Mammary epithelial cell (primary cell): ENCODE measurements at regions of chr14 and their contacts with region 1.

Region 1: GRCh38 chr14:77616454-77617229 is at the start of gene SPTLC2:
- DNase-seq: peak; percentile 99
- H3K4me3 ChIP-seq: peak within 1 kb of the TSS; percentile 75 to 79 (median 77)
- H3K27ac ChIP-seq: peak within 1 kb of the TSS; percentile 78
- H3K4me1 ChIP-seq: peaks cover 22% of the 10 kb centered on the region
- H3K27me3 ChIP-seq: no peaks in the 10 kb centered on the region
- CTCF ChIP-seq: peak in 1 of 2 donors; percentile 30
- total RNA-seq, gene SPTLC2: 38.7 to 47.2 TPM

Region 2: DNA sequence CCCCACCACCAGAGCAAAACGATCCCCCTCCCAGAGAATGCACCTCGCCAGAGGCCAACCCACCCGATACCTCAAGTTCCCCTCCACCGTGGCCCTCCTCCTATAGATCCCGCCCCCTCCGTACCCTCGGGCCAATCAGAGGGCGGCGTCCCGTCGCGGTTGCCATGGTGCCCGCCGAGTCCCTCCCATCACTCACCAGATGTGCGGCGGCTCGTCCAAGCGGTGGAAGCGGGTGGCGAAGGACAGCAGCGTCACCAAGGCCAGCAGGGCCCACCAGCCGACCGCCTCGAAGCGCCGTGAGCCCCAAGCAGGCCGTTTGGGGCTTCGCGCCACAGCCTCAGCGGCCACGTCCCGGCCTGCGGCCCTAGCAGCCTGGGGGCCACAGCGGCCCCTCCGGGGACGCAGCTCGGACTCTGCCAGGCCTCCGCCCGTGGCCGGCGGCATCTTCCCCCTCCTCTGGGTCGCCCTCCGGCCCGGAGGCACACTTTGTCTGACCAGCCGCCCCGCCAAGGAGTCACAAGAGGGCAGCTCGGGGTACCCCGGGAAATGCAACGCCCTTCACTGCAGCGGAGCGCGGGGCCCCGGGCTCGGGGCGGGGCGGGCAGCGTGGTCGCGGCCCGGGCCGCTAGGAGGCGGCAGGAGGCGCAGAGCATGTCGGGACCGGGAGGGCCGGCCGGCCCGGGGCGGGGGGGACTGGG is 296.3 kb before region 1 on chr14 and contains the start of gene POMT2:
- CTCF ChIA-PET with region 1: no interaction called
- dilution Hi-C with region 1: no loop called
- in situ Hi-C with region 1: no loop called
- intact Hi-C with region 1: loop called (anchors 10 kb)
- DNase-seq: peak; percentile 88
- H3K4me3 ChIP-seq: peak within 1 kb of the TSS; percentile 89 to 92 (median 90)
- H3K27ac ChIP-seq: peak within 1 kb of the TSS; percentile 87
- H3K4me1 ChIP-seq: peaks cover 38% of the 10 kb centered on the region
- H3K27me3 ChIP-seq: no peaks in the 10 kb centered on the region
- CTCF ChIP-seq: peak in 1 of 2 donors; percentile 34
- total RNA-seq, gene POMT2: 17.0 to 38.4 TPM

Region 3: DNA sequence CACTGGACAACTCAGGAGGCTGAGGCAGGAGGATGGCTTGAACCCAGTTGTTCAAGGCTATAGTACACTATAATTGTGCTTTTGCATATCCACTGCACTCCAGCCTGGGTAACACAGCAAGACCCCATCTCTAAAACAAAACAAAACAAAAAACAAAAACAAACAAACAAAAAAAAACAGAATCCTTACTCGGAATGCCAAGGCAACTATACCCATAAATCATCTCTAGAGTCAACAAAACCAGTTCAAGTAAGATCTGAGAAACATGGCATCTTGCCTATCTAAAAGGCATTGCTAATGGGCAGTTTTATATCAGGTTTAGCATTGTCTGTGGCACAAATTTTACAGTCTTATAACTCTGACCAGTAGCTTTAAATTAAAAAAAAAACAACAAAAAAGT is 227.7 kb before region 1 on chr14:
- CTCF ChIA-PET with region 1: no interaction called
- dilution Hi-C with region 1: no loop called
- in situ Hi-C with region 1: no loop called
- intact Hi-C with region 1: no loop called
- DNase-seq: no peak
- H3K4me3 ChIP-seq: no peak overlapping the region
- H3K27ac ChIP-seq: no peak overlapping the region
- H3K4me1 ChIP-seq: no peaks in the 10 kb centered on the region
- H3K27me3 ChIP-seq: no peaks in the 10 kb centered on the region
- CTCF ChIP-seq: no peak

Region 4: GRCh38 chr14:77542421-77543239 is 74.0 kb before region 1 on chr14:
- CTCF ChIA-PET with region 1: no interaction called
- dilution Hi-C with region 1: loop called (anchors 5 kb)
- in situ Hi-C with region 1: no loop called
- intact Hi-C with region 1: no loop called
- DNase-seq: no peak
- H3K4me3 ChIP-seq: no peak overlapping the region
- H3K27ac ChIP-seq: no peak overlapping the region
- H3K4me1 ChIP-seq: no peaks in the 10 kb centered on the region
- H3K27me3 ChIP-seq: no peaks in the 10 kb centered on the region
- CTCF ChIP-seq: no peak

Region 5: GRCh38 chr14:77565994-77566305 is 50.7 kb before region 1 on chr14:
- CTCF ChIA-PET with region 1: no interaction called
- dilution Hi-C with region 1: no loop called
- in situ Hi-C with region 1: no loop called
- intact Hi-C with region 1: loop called (anchors 2 kb)
- DNase-seq: no peak
- H3K4me3 ChIP-seq: no peak overlapping the region
- H3K27ac ChIP-seq: no peak overlapping the region
- H3K4me1 ChIP-seq: no peaks in the 10 kb centered on the region
- H3K27me3 ChIP-seq: no peaks in the 10 kb centered on the region
- CTCF ChIP-seq: no peak

Region 6: GRCh38 chr14:77838831-77839511 is 222.3 kb after region 1 on chr14:
- CTCF ChIA-PET with region 1: no interaction called
- dilution Hi-C with region 1: no loop called
- in situ Hi-C with region 1: no loop called
- intact Hi-C with region 1: no loop called
- DNase-seq: no peak
- H3K4me3 ChIP-seq: no peak overlapping the region
- H3K27ac ChIP-seq: no peak overlapping the region
- H3K4me1 ChIP-seq: no peaks in the 10 kb centered on the region
- H3K27me3 ChIP-seq: no peaks in the 10 kb centered on the region
- CTCF ChIP-seq: no peak